ENCODE measurements at regions of chr16 and their contacts with region 1.

Region 1: DNA sequence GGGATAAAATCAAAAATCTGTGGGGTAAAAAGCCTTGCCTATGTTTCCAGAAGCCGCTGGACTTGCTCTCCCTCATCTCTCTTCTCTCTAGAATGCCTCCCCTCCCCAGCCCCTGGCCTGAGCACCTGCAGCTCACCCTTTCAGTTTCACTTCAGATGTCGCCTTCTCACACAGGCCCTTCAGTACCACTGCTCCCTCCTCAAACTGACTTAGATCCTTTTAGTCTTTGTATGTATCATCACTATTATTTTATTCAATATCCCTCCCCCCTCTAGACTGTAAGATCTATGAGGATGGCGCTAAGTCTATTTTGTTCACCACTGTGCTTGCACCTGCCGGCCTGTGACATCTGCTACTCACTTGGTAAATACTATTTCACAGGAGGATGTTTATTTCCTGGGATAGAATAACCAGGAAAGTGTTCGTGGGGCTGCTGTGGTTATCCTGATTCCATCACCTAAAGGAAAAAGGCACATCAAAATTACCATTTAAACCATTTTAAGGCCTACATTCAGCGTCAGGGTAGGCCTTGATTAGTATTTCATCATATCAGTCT is 122.3 kb downstream of the MRTFB start:
- DNase-seq: no peak
- ATAC-seq: no peak
- H3K4me3 ChIP-seq: no peak overlapping the region
- H3K27ac ChIP-seq: peak overlapping the region; percentile 17
- H3K4me1 ChIP-seq: peaks cover 6% of the 10 kb centered on the region
- H3K27me3 ChIP-seq: no peaks in the 10 kb centered on the region

Region 2: GRCh38 chr16:14013571-14014282 is 179.7 kb before region 1 on chr16:
- intact Hi-C with region 1: loop called in 2 of 4 experiments (anchors 10 kb)
- DNase-seq: peak in 1 of 3 donors; percentile 13
- ATAC-seq: peak; percentile 60 to 61
- H3K4me3 ChIP-seq: no peak overlapping the region
- H3K27ac ChIP-seq: peak overlapping the region; percentile 72
- H3K4me1 ChIP-seq: peaks cover 8% of the 10 kb centered on the region
- H3K27me3 ChIP-seq: no peaks in the 10 kb centered on the region

Region 3: GRCh38 chr16:14310519-14310991 is 117.2 kb after region 1 on chr16:
- intact Hi-C with region 1: no loop called
- DNase-seq: peak in 1 of 3 donors; percentile 65
- ATAC-seq: no peak
- H3K4me3 ChIP-seq: no peak overlapping the region
- H3K27ac ChIP-seq: no peak overlapping the region
- H3K4me1 ChIP-seq: peaks cover 7% of the 10 kb centered on the region
- H3K27me3 ChIP-seq: no peaks in the 10 kb centered on the region